Right ventricle myocardium superior (tissue), 1 donor: ENCODE measurements at regions of chr19 and their contacts with region 1.

Region 1: DNA sequence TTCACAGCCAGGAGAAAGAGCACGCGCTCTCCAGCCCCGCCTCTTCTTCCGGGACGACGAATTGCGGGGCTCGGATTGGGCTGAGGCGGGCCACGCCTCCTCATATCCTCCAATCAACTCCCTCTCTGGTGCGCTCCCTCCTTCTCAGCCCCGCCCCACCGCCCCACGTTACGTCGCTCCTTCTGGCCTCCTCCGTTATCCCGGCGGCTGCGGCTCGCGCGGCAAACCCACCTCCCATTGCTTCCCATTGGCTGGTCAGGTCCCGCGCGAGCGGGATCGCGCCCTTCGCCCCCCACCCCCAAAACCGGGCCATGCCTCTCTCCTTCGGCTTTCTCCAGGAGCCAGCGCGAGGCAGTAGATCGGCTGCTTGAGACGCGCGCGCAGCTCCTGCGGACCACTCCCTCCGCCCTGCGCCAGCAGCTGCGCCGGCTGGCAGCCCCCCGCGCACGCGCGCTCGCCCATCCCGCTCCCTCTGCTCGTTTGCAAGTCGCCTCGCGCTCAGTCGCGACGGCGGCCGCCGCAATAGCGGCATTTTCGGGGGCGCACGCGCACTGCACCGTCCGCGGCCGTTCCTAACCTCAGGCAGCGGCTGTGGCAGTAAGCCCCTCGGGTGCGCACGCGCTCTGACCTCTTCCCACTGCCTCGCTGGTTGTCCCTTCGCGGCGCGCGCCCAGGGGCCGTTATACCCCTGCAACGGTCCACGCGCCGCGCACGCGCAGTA is 512 bp upstream of the ARHGAP35 start:
- DNase-seq: peak; percentile 99
- ATAC-seq: peak; percentile 86

Region 2: GRCh38 chr19:46992699-46993535 is 132.6 kb after region 1 on chr19:
- intact Hi-C with region 1: loop called (anchors 2 kb)
- DNase-seq: peak; percentile 74
- ATAC-seq: peak; percentile 53